ENCODE measurements at regions of chr9 and their contacts with region 1.

Region 1: DNA sequence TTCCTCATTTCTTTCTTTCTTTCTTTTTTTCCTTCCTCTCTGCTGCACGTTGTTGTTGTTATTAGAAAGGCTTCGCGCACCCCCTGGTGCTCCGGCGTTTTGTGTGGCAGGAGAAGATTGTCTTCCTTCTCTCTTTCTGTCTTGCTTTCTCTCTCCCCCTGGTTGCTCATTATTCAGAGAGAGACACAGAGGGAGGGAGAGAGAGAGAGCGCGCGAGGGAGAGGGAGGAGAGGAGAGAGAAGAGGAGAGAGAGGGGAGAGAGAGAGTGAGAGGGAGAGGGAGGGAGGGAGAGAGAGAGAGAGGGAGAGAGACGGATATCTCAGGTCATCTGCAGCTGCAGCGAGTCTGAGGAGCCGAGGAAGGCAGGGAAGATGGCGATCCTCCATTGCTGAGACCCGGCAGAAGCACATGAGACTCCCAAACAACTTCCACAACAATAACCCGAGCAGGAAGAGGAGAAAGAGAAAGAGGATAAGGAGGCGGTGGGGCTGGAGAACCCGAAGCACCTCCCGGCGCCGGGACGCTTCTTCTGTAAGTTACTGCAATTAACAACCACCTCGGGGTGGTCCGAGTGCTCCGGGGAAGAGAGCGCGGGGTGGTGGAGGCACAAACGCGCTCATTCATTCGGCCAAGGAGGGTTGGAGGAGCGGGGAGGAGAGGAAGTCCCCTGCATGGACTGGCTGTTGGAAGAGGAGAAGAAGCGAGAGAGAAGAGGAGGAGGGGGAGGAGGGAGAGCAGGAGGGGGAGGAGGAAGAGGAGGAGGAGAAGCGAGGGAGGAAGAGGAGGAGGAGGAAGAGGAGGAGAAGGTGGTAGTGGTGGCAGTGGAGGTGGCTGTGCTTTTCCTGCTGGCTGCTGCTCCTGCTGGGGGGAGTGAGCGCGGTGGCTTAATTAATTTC is at the start of gene ZNF462:
- DNase-seq: peak; percentile 64
- H3K4me3 ChIP-seq: peak within 1 kb of the TSS; percentile 78 to 82
- H3K27ac ChIP-seq: peak within 1 kb of the TSS; percentile 85 to 89
- H3K4me1 ChIP-seq: peaks cover 5% of the 10 kb centered on the region
- H3K27me3 ChIP-seq: no peaks in the 10 kb centered on the region
- CTCF ChIP-seq: peak; percentile 92 to 99 (median 96)
- POLR2A ChIP-seq: no peak
- total RNA-seq, gene ZNF462: 53.2 to 61.6 TPM

Region 2: DNA sequence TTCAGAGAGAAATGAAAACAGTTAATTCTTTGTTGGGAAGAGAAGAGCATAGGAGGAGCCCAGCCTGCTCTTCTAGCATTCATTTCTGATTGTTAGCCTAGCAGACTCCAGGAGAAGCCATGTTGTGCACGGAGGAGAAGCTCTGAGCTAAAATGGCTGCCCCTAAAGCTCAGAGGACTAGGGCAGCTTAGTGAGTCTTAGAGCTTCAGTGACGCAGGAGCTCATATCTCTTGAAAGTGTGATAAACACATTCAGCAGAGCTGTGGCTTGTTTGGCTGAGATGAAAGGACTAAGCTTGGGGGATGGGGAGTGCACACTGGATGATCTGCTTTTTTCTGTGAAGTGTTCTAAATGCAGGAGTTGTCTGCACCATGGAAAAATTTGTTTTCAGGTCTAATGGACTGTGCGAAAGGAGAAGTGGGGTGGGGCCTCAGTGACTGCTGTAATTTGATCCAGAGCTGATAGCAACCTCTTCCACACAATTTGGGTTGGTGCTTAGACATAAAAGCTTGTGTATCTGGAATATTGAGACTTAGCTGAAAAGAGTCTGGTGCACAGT is 58.3 kb after region 1 on chr9:
- intact Hi-C with region 1: loop called (anchors 10 kb)
- DNase-seq: peak; percentile 85
- H3K4me3 ChIP-seq: no peak overlapping the region
- H3K27ac ChIP-seq: peak overlapping the region; percentile 87 to 90
- H3K4me1 ChIP-seq: peaks cover 37% of the 10 kb centered on the region
- H3K27me3 ChIP-seq: no peaks in the 10 kb centered on the region
- CTCF ChIP-seq: no peak
- POLR2A ChIP-seq: no peak

Measured in testis (tissue), 5 donors.